IMR-90 (cell line): ENCODE measurements at regions of chr14 and their contacts with region 1.

Region 1: GRCh38 chr14:52380294-52380693 is 66.2 kb downstream of the PTGER2 start:
- DNase-seq: peak; percentile 75
- ATAC-seq: peak; percentile 72
- H3K4me3 ChIP-seq: no peak overlapping the region
- H3K27ac ChIP-seq: peak overlapping the region; percentile 2; the same call in 1 of the 2 replicates
- H3K4me1 ChIP-seq: peaks cover 4% of the 10 kb centered on the region
- H3K27me3 ChIP-seq: no peaks in the 10 kb centered on the region
- CTCF ChIP-seq: no peak
- POLR2A ChIP-seq: no peak
- RAD21 ChIP-seq: no peak

Region 2: GRCh38 chr14:52363961-52364360 is 16.3 kb before region 1 on chr14:
- CTCF ChIA-PET with region 1: no interaction called
- POLR2A ChIA-PET with region 1: no interaction called
- dilution Hi-C with region 1: no loop called
- in situ Hi-C with region 1: no loop called
- intact Hi-C with region 1: loop called (anchors 2 kb)
- DNase-seq: no peak
- ATAC-seq: no peak
- H3K4me3 ChIP-seq: no peak overlapping the region
- H3K27ac ChIP-seq: no peak overlapping the region
- H3K4me1 ChIP-seq: peaks cover 7% of the 10 kb centered on the region
- H3K27me3 ChIP-seq: 0 out of 2 replicates have a peak, but pooled peaks cover 2% of the 10 kb centered on the region
- CTCF ChIP-seq: no peak
- POLR2A ChIP-seq: no peak
- RAD21 ChIP-seq: no peak

Region 3: DNA sequence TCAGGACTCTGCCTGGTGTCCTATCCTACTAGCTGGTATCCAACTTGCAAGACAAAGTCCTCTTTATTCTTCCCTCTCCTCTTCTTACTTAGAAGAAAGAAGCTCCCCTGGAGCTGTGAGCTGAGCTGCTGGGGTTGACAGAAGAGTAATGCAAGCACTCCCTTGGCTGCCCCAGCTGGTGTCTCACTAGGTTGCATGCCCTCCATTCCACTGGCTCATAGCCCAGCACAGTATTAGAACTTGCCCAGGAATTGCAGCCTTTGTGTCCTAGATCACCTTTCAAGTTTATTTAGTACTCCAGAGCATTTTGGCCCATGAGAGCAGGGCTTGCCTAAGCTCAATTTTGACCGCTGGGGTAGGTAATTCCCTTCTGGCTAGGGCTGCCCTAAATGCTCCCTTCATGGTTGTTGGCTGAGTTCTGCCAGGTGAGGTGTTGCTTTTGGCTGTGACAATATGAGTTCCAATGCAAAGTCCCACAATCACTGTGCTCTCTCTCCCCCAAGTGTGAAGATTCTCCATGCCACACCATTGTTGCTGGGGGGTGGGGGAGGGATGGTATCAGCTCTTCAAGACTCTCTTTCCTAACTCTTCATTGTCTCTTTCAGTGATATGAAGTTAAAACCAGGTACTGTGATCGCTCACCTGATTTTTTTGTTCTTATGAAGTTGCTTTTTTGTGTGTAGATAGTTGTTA is 1090.2 kb after region 1 on chr14:
- CTCF ChIA-PET with region 1: no interaction called
- POLR2A ChIA-PET with region 1: no interaction called
- dilution Hi-C with region 1: no loop called
- in situ Hi-C with region 1: no loop called
- intact Hi-C with region 1: no loop called
- DNase-seq: peak; percentile 60
- ATAC-seq: peak; percentile 92
- H3K4me3 ChIP-seq: no peak overlapping the region
- H3K27ac ChIP-seq: peak overlapping the region; percentile 58; the same call in 1 of the 2 replicates
- H3K4me1 ChIP-seq: peaks cover 8% of the 10 kb centered on the region
- H3K27me3 ChIP-seq: no peaks in the 10 kb centered on the region
- CTCF ChIP-seq: no peak
- POLR2A ChIP-seq: no peak
- RAD21 ChIP-seq: no peak